ENCODE measurements at regions of chr3 and their contacts with region 1.

Region 1: GRCh38 chr3:151468284-151468917 is 7.5 kb upstream of the IGSF10 start:
- DNase-seq: peak; percentile 78
- H3K4me3 Mint-ChIP-seq: no peak overlapping the region
- H3K27ac Mint-ChIP-seq: no peak overlapping the region
- H3K4me1 Mint-ChIP-seq: no peaks in the 10 kb centered on the region
- H3K27me3 Mint-ChIP-seq: no peaks in the 10 kb centered on the region
- CTCF ChIP-seq: peak; percentile 93

Region 2: DNA sequence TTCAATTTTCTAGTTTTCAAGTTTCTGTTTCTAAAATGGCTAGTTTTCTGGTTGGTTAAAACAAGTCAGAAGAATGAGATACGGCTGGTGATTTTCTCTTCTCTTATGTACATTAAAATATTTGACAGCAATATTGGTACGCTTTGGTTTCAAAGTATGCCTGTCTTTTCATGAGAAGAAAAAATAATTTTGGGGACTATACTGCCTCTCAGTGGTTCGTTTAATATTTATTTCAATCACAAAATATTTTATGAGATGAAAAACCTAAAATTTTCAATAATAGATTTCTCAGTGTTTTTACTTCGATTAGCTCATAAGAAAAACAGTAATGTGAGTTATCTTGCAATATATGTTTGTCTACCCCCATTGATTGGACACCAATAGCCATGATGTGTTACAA is 192.5 kb after region 1 on chr3:
- CTCF ChIA-PET with region 1: no interaction called
- intact Hi-C with region 1: loop called (anchors 2 kb)
- DNase-seq: no peak
- H3K4me3 Mint-ChIP-seq: no peak overlapping the region
- H3K27ac Mint-ChIP-seq: no peak overlapping the region
- H3K4me1 Mint-ChIP-seq: no peaks in the 10 kb centered on the region
- H3K27me3 Mint-ChIP-seq: no peaks in the 10 kb centered on the region
- CTCF ChIP-seq: no peak

Region 3: GRCh38 chr3:151824546-151824945 is 356.1 kb after region 1 on chr3:
- CTCF ChIA-PET with region 1: no interaction called
- intact Hi-C with region 1: loop called (anchors 5 kb)
- DNase-seq: no peak
- H3K4me3 Mint-ChIP-seq: no peak overlapping the region
- H3K27ac Mint-ChIP-seq: no peak overlapping the region
- H3K4me1 Mint-ChIP-seq: no peaks in the 10 kb centered on the region
- H3K27me3 Mint-ChIP-seq: no peaks in the 10 kb centered on the region
- CTCF ChIP-seq: no peak